HEK293T (cell line): ENCODE measurements at regions of chr5 and their contacts with region 1.

Region 1: GRCh38 chr5:42583322-42583721 is 160.1 kb downstream of the GHR start:
- DNase-seq: peak; percentile 61

Region 2: DNA sequence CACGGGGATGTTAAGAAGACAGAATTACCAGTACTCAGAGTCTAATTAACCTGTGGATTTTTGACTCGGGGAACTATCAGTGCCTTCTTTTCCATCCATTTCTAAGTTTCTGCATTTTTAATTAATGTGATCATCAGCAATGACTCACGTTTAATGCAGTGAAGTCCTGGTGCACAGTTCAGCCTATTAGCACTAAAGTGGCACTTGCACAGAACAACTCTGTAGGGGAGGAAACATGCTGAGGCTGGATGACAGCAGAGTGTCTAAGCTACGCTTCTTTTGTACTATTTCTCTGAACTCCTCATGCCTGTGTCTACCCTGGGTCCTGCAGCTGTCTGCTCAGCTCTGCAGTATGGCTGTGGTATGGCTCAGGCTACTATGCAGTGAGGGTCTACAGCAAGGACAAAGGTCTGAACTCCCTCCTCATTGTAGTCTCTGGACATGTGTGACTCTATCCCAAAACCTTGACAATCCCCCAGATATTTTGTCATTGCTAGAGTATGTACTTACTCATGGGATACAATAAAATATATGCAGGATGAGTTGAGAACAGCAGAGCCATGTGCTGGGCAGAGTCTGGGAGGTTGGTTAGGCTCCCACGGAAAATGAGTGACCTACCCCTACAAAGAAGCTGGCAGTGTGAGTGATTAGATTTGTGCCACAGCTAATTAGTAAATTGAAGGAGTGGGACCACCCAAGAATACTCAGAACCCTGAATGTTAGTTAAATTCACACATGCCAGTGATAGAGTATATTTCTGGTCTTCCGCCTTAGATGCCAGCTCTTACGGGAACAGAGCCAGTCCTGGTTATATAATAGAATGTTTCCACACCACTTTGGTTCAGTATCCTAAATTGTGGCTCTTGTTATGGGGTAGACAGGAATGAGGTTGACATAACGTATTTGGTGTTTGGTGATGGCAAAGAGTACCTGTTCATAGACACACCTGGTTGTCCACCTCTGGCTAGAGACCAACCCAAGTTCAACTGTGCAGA is 12.1 kb before region 1 on chr5:
- CTCF ChIA-PET with region 1: interaction called, 12 read pairs
- POLR2A ChIA-PET with region 1: no interaction called
- DNase-seq: no peak